Tibial artery (tissue), 4 donors: ENCODE measurements at regions of chr17 and their contacts with region 1.

Region 1: DNA sequence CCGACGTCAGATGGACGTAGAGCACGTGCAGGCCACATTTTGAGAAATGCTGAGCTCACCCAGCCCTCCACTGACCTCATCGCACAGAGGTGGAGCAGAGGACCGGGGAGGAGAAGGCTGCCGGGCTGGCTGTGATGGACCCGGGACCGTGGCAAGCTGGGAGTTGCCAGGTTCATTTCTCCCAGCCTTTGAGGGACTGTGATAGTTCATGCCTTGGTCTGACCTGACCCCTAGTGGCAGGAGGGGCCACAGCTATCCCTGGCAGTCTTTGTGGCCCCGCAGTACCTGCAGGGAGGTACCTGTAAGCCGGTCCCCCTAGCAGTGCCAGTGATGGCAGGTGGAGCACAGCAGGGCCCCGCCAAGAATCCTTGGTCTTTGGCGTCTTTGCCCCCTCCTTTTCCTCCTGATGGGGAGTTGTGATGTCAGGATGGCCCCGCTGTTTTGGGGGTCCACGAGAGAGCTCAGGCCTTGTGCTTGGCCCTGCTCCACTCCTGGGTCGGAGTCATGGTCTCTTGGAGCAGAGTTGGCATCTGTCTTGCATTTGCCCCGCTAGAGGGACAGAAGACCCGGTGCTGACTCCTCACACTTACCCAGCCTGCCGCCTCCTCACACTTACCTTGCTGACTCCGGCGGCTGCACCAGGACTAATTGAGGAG is 50.4 kb downstream of the OR1D5 start:
- DNase-seq: peak in 1 of 2 donors; percentile 60
- H3K4me3 ChIP-seq: no peak overlapping the region
- H3K27ac ChIP-seq: no peak overlapping the region
- H3K4me1 ChIP-seq: no peaks in the 10 kb centered on the region
- H3K27me3 ChIP-seq: no peaks in the 10 kb centered on the region
- CTCF ChIP-seq: peak; percentile 78 to 86

Region 2: DNA sequence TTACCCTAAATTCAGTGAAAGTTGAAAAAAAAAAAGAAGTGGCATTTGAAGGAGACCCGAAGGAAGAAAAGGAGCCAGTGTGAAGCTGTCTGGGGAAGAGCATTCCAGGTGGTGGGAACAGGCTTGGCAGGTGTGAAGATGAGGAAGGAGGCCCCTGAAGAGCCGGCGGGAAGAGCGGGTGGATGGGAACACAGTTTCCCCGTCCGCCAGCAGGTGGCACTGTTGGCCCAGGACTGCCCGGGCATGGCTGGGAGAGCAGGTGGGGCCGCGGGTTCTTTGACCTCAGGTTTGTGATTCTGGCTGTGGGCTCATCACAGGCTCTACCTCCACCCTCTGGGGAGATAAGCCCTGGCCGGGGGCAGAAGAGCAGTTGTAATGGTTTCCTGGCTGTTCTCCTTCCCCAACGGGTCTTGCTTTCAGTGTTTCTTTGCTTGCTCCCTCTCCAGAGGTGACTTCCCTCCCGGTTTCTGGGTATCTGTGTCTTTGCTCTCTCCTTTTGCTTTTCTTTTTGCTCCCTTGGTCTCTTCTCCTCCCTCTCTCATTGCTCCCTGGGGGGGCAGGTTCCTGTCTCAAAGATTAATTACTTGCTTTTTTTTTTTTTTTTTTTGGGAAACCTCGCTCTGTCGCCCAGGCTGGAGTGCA is 184.5 kb before region 1 on chr17:
- intact Hi-C with region 1: loop called (anchors 5 kb)
- DNase-seq: peak; percentile 25 to 69
- H3K4me3 ChIP-seq: no peak overlapping the region
- H3K27ac ChIP-seq: no peak overlapping the region
- H3K4me1 ChIP-seq: no peaks in the 10 kb centered on the region
- H3K27me3 ChIP-seq: peaks cover 0 to 39% of the 10 kb centered on the region in 2 donors
- CTCF ChIP-seq: peak; percentile 88 to 91